ENCODE measurements at regions of chr2 and their contacts with region 1.

Region 1: GRCh38 chr2:224927646-224928173 is 114.6 kb downstream of the DOCK10 start:
- DNase-seq: peak; percentile 84
- ATAC-seq: peak; percentile 62
- H3K4me3 Mint-ChIP-seq: peak overlapping the region; percentile 60
- H3K27ac Mint-ChIP-seq: peak overlapping the region; percentile 98
- H3K4me1 Mint-ChIP-seq: peaks cover 99% of the 10 kb centered on the region
- H3K27me3 Mint-ChIP-seq: no peaks in the 10 kb centered on the region

Region 2: GRCh38 chr2:224211791-224212190 is 715.9 kb before region 1 on chr2:
- CTCF ChIA-PET with region 1: no interaction called
- POLR2A ChIA-PET with region 1: no interaction called
- intact Hi-C with region 1: no loop called
- DNase-seq: no peak
- ATAC-seq: no peak
- H3K4me3 Mint-ChIP-seq: no peak overlapping the region
- H3K27ac Mint-ChIP-seq: no peak overlapping the region
- H3K4me1 Mint-ChIP-seq: no peaks in the 10 kb centered on the region
- H3K27me3 Mint-ChIP-seq: peaks cover 1% of the 10 kb centered on the region

Region 3: GRCh38 chr2:224585205-224586088 is 342.3 kb before region 1 on chr2 and contains the start of gene CUL3:
- CTCF ChIA-PET with region 1: no interaction called
- POLR2A ChIA-PET with region 1: no interaction called
- intact Hi-C with region 1: loop called (anchors 5 to 10 kb)
- DNase-seq: peak; percentile 100
- ATAC-seq: peak; percentile 86
- H3K4me3 Mint-ChIP-seq: peak within 1 kb of the TSS; percentile 95
- H3K27ac Mint-ChIP-seq: peak within 1 kb of the TSS; percentile 96
- H3K4me1 Mint-ChIP-seq: peaks cover 29% of the 10 kb centered on the region
- H3K27me3 Mint-ChIP-seq: no peaks in the 10 kb centered on the region
- total RNA-seq, gene CUL3: 77.6 to 85.8 TPM

Region 4: DNA sequence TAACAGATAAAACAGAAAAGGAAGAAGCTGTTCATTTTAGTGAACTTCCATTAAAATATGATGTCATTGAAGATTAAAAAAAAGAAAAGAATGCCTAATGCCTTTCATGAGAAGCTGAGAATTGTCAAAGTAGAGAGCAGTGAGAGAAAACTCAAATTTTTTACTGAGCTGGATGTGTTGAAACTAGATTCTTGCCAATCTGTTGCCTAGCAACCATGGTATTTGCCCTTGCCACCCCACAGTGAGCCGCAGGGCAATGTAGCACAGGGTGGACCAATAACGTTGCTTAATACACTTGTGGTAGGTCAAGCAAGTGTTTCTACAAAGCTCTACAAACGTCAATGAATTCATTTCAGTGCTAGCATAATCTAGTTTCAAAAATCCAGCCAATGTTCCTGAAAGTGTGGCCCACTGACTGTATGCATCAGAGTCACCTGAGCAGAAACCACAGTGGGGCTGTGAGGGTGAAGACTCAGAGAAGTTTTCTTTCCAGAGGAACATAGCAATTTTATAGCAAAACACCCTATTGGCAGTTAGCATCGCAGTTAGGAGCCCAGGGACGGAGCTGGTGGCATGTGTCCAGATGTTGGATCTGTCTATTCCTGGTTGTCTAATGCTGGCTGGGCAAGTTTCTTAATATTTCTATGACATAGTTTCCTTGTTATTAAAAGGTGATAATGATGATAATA is 17.7 kb before region 1 on chr2:
- CTCF ChIA-PET with region 1: interaction called, 4 read pairs
- POLR2A ChIA-PET with region 1: interaction called, 10 read pairs
- intact Hi-C with region 1: loop called in 1 of 2 experiments (anchors 2 kb)
- DNase-seq: peak; percentile 51
- ATAC-seq: peak; percentile 80
- H3K4me3 Mint-ChIP-seq: no peak overlapping the region
- H3K27ac Mint-ChIP-seq: peak overlapping the region; percentile 81
- H3K4me1 Mint-ChIP-seq: peaks cover 56% of the 10 kb centered on the region
- H3K27me3 Mint-ChIP-seq: no peaks in the 10 kb centered on the region

Region 5: GRCh38 chr2:224946895-224947294 is 19.2 kb after region 1 on chr2:
- CTCF ChIA-PET with region 1: interaction called, 31 read pairs
- POLR2A ChIA-PET with region 1: interaction called, 56 read pairs
- intact Hi-C with region 1: loop called (anchors 1 kb)
- DNase-seq: no peak
- ATAC-seq: peak; percentile 63
- H3K4me3 Mint-ChIP-seq: peak overlapping the region; percentile 79
- H3K27ac Mint-ChIP-seq: peak overlapping the region; percentile 91
- H3K4me1 Mint-ChIP-seq: peaks cover 61% of the 10 kb centered on the region
- H3K27me3 Mint-ChIP-seq: no peaks in the 10 kb centered on the region

Region 6: DNA sequence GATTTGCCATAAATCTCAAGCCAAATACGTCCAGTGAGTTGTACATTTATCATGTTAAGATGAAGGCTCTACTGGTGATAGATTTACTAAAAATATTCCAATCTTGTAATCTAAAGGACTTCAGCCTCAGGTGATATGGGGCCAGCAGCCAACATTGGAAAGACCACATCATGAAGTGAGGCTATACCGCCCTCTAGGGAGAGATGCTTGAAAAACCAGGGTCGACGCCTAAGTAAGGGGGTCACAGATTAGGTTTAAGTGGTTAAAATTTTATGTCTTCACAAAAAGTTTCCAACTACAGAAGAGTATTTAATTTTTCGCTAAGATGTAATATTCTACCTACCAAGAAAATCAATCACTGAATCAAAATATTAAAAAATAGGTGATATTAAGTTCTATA is 81.2 kb after region 1 on chr2:
- CTCF ChIA-PET with region 1: interaction called, 8 read pairs
- POLR2A ChIA-PET with region 1: interaction called, 3 read pairs
- intact Hi-C with region 1: loop called (anchors 1 kb)
- DNase-seq: peak; percentile 43
- ATAC-seq: no peak
- H3K4me3 Mint-ChIP-seq: no peak overlapping the region
- H3K27ac Mint-ChIP-seq: peak overlapping the region; percentile 70
- H3K4me1 Mint-ChIP-seq: peaks cover 93% of the 10 kb centered on the region
- H3K27me3 Mint-ChIP-seq: no peaks in the 10 kb centered on the region

Region 7: DNA sequence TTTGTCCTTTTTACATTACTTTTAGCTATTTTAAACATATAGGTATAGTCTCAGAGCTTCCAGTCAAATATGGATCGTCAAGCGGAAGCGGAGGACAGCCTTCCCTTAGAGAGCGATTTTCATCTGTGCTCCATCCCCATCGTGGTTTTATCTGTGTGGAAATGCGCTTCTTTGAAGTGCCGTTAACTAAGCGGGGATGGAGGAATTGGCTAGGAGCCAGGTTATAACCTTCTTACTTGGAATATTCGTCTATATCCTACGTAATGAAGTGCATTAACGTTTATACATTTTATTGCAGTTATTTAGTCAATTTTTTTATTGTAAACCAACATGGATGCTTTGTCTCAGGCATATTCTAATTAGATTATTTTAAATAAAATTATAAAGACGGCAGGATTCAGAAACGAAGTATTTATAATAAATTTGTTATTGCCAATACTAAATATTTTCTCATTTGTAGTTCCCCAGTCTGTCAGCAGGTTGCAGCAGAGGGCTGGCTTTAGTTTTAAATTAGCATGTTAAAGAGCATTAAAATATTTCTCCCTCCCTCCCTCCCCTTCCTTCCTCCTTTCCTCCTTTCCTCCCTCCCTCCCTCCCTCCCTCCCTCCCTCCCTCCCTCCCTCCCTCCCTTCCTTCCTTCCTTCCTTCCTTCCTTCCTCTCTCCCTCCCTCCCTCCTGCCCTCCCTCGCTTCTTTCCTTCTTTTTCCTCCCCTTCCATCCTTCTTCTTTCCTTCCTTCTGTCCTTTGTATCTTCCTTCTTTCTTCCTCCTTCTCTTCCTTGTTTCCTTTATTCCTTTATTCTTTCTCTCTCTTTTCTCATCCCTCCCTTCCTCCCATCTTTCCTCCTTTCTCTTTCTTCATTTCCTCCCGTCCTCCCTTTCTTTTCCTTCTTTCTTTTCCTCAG is 195.1 kb after region 1 on chr2:
- CTCF ChIA-PET with region 1: no interaction called
- POLR2A ChIA-PET with region 1: no interaction called
- intact Hi-C with region 1: loop called in 1 of 2 experiments (anchors 5 kb)
- DNase-seq: peak; percentile 39
- ATAC-seq: no peak
- H3K4me3 Mint-ChIP-seq: no peak overlapping the region
- H3K27ac Mint-ChIP-seq: no peak overlapping the region
- H3K4me1 Mint-ChIP-seq: peaks cover 8% of the 10 kb centered on the region
- H3K27me3 Mint-ChIP-seq: peaks cover under 1% of the 10 kb centered on the region

Measured in activated CD4-positive, alpha-beta T cell treated with anti-CD3 and anti-CD28 coated beads for 36 hours (primary cell).